ENCODE measurements at regions of chr16 and their contacts with region 1.

Region 1: GRCh38 chr16:1723450-1724147 is 17.6 kb downstream of the MAPK8IP3 start:
- DNase-seq: peak in 5 of 9 experiments; percentile 21 to 67 (median 55)
- ATAC-seq: peak; percentile 61
- H3K4me3 ChIP-seq: no peak overlapping the region
- H3K4me3 Mint-ChIP-seq: peak overlapping the region; percentile 3
- H3K27ac ChIP-seq: peak overlapping the region in 1 of 2 experiments; percentile 53
- H3K27ac Mint-ChIP-seq: peak overlapping the region; percentile 28
- H3K4me1 ChIP-seq: peaks cover 32% of the 10 kb centered on the region
- H3K4me1 Mint-ChIP-seq: peaks cover 37% of the 10 kb centered on the region
- H3K27me3 ChIP-seq: no peaks in the 10 kb centered on the region
- H3K27me3 Mint-ChIP-seq: no peaks in the 10 kb centered on the region
- CTCF ChIP-seq: peak; percentile 85

Region 2: DNA sequence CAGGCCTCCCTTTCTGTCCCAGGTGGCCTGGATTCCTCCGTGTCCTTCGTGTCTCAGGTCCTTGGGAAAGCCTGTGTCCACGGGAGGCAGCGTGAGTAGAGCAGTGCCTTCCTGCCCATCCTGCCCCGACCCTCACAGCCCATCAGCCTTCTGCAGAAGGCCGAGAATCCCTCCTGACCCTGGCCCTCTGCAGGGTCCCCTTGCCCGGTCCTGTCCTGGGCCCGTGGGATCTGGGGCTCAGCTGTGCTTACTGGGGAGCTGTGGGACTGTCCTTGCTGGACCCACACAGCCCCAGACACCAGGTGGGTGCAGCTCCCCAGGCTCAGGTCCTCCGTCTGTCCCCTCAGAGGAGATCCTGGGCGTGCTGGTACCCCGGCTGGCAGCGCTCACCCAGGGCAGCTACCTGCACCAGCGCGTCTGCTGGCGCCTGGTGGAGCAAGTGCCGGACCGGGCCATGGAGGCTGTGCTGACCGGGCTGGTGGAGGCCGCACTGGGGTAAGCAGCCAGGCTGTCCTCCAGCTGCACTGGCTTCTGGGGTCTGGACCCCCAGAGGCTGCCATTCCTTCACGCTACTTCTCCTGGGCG is 226.5 kb before region 1 on chr16:
- CTCF ChIA-PET with region 1: no interaction called
- POLR2A ChIA-PET with region 1: no interaction called
- intact Hi-C with region 1: no loop called
- DNase-seq: no peak
- ATAC-seq: no peak
- H3K4me3 ChIP-seq: no peak overlapping the region
- H3K4me3 Mint-ChIP-seq: no peak overlapping the region
- H3K27ac ChIP-seq: no peak overlapping the region
- H3K27ac Mint-ChIP-seq: no peak overlapping the region
- H3K4me1 ChIP-seq: peaks cover 16% of the 10 kb centered on the region
- H3K4me1 Mint-ChIP-seq: peaks cover 11% of the 10 kb centered on the region
- H3K27me3 ChIP-seq: no peaks in the 10 kb centered on the region
- H3K27me3 Mint-ChIP-seq: no peaks in the 10 kb centered on the region
- CTCF ChIP-seq: no peak

Region 3: DNA sequence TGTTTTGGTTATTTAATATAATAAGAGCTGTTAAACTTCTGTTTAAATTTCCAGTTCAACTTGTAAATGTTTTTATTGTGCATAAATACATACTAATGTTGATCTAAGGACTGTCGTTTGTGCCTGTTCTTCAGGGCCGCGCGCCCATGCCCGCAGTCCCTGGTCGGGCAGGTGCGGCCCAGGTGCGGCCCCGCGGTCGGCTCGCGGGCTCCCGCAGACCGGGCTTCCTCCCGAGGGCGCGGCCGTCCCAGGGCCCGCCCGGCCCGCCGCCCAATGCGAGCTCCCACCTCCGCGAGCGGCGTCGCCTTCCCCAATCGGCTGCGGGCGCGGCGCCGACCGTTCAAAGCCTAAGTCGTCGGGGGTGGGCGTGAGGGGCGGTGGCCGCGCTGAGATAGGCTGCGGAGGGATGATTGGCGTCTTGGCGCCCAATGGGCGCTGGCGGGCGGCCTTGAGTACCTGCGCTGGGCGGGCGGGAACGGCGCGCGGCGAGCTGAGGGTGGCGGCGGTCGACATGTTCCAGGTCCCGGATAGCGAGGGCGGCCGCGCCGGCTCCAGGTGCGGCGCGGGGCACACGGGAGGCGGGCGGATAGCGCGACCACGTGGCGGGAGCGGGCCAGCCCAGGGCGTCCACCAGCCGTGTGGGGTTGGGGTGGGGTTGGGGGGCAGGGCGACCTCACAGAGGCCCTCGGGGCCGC is 45.6 kb before region 1 on chr16 and contains the start of gene JPT2:
- CTCF ChIA-PET with region 1: no interaction called
- POLR2A ChIA-PET with region 1: no interaction called
- intact Hi-C with region 1: loop called in 1 of 2 experiments (anchors 1 kb)
- DNase-seq: peak; percentile 87 to 98 (median 95)
- ATAC-seq: peak; percentile 97
- H3K4me3 ChIP-seq: peak within 1 kb of the TSS; percentile 54 to 57
- H3K4me3 Mint-ChIP-seq: peak within 1 kb of the TSS; percentile 88
- H3K27ac ChIP-seq: peak within 1 kb of the TSS; percentile 31 to 37
- H3K27ac Mint-ChIP-seq: peak within 1 kb of the TSS; percentile 62
- H3K4me1 ChIP-seq: peaks cover 15% of the 10 kb centered on the region
- H3K4me1 Mint-ChIP-seq: peaks cover 27% of the 10 kb centered on the region
- H3K27me3 ChIP-seq: no peaks in the 10 kb centered on the region
- H3K27me3 Mint-ChIP-seq: no peaks in the 10 kb centered on the region
- CTCF ChIP-seq: no peak
- total RNA-seq, gene JPT2: 1.4 to 2.8 TPM